Cardiac septum (tissue), 1 donor: ENCODE measurements at regions of chr11 and their contacts with region 1.

Region 1: GRCh38 chr11:65329944-65330403 is 3.7 kb upstream of the DPF2 start:
- DNase-seq: peak; percentile 86

Region 2: GRCh38 chr11:65159012-65159411 is 171.0 kb before region 1 on chr11:
- intact Hi-C with region 1: no loop called
- DNase-seq: no peak

Region 3: GRCh38 chr11:65274735-65275682 is 55.0 kb before region 1 on chr11:
- intact Hi-C with region 1: loop called (anchors 1 kb)
- DNase-seq: peak; percentile 76

Region 4: DNA sequence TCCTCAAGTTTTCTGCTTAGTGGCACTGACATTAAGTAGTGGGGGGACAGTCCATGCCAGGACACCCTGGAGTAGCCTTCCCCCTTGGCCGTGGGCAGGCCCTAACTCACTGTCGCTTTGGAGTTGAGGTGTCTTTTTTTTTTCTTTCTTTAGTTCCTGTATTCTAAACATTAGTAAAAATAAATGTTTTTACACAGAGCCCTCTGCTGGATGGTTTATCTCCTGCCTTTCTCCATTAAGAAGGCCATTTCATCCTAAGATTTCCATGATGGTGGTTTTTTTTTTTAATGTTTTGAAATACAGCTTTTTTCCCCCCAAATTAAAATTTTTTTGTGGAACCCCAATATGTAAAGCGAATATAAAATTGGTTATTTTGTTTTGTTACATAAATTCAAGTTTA is 22.8 kb after region 1 on chr11:
- intact Hi-C with region 1: no loop called
- DNase-seq: no peak

Region 5: DNA sequence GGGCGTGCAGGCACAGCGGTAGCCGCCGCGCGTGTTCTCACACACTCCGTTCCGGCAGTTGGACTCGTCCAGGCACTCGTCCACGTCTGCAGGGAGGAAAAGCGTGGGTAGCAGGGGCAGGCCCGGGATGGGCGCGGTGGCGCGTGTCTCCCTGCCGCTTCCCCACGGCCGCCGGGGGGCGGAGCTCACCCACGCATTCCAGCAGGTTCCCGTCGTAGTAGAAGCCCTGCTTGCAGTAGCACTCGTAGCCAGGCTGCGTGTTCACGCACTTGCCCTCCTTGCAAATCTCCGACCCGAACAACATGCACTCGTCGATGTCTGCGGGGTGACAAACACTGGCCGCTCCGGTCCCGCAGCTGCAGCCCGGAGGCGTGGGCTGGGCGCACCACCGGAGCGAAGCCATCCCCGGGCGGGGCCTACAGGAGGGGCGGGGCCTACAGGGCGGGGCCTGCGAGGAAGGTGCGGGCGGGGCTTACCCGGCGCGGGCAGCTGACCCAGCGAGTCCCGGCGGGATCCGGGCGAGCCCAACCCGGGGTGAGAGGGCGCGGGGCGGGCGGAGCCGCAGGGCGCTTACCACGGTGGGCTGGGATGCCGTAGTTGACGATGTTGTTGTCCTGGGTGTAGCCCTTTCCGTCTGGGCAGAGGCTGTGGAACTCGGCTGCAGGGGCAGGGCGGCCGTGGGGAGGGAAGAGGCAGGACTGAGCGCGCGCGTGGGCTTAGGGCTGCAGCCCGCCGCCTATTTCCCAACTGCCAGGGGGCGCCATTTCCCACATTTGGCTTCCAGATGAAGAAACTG is 210.5 kb after region 1 on chr11:
- intact Hi-C with region 1: no loop called
- DNase-seq: peak; percentile 97